Ascending aorta (tissue), 2 donors: ENCODE measurements at regions of chr10 and their contacts with region 1.

Region 1: GRCh38 chr10:11611248-11612020 is at the start of gene USP6NL:
- DNase-seq: peak; percentile 36 to 91
- H3K4me3 ChIP-seq: peak within 1 kb of the TSS; percentile 91 to 96
- H3K27ac ChIP-seq: peak within 1 kb of the TSS; percentile 89 to 90
- H3K4me1 ChIP-seq: peaks cover 0 to 3% of the 10 kb centered on the region in 2 donors
- H3K27me3 ChIP-seq: no peaks in the 10 kb centered on the region
- CTCF ChIP-seq: no peak
- total RNA-seq, gene USP6NL: 20.5 TPM

Region 2: GRCh38 chr10:11527691-11528255 is 83.7 kb before region 1 on chr10:
- intact Hi-C with region 1: loop called (anchors 2 kb)
- DNase-seq: no peak
- H3K4me3 ChIP-seq: peak overlapping the region in 1 of 2 donors; percentile 20
- H3K27ac ChIP-seq: no peak overlapping the region
- H3K4me1 ChIP-seq: peaks cover 0 to 4% of the 10 kb centered on the region in 2 donors
- H3K27me3 ChIP-seq: no peaks in the 10 kb centered on the region
- CTCF ChIP-seq: no peak

Region 3: GRCh38 chr10:11551916-11552602 is 59.4 kb before region 1 on chr10:
- intact Hi-C with region 1: loop called (anchors 5 kb)
- DNase-seq: no peak
- H3K4me3 ChIP-seq: no peak overlapping the region
- H3K27ac ChIP-seq: peak overlapping the region in 1 of 2 donors; percentile 16
- H3K4me1 ChIP-seq: no peaks in the 10 kb centered on the region
- H3K27me3 ChIP-seq: no peaks in the 10 kb centered on the region
- CTCF ChIP-seq: no peak

Region 4: DNA sequence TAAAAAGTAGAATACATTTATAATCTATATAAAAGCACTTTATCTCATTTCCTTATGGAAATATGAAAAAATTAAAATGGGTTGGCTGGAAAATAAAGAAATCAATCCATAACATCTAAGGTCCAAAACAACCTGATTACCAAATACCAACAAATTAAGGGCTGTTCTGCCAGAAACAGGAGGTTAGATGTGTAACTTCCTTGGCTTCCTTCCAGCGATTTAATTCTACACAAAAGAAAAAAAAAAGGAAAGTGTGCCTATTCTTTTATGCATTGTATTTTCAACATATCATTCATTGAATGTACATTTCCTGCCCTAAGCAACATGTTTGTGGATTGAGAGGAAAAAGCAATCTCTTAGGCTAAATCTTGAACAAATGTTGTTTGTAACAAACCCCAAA is 36.2 kb after region 1 on chr10:
- intact Hi-C with region 1: no loop called
- DNase-seq: no peak
- H3K4me3 ChIP-seq: no peak overlapping the region
- H3K27ac ChIP-seq: no peak overlapping the region
- H3K4me1 ChIP-seq: no peaks in the 10 kb centered on the region
- H3K27me3 ChIP-seq: no peaks in the 10 kb centered on the region
- CTCF ChIP-seq: no peak

Region 5: DNA sequence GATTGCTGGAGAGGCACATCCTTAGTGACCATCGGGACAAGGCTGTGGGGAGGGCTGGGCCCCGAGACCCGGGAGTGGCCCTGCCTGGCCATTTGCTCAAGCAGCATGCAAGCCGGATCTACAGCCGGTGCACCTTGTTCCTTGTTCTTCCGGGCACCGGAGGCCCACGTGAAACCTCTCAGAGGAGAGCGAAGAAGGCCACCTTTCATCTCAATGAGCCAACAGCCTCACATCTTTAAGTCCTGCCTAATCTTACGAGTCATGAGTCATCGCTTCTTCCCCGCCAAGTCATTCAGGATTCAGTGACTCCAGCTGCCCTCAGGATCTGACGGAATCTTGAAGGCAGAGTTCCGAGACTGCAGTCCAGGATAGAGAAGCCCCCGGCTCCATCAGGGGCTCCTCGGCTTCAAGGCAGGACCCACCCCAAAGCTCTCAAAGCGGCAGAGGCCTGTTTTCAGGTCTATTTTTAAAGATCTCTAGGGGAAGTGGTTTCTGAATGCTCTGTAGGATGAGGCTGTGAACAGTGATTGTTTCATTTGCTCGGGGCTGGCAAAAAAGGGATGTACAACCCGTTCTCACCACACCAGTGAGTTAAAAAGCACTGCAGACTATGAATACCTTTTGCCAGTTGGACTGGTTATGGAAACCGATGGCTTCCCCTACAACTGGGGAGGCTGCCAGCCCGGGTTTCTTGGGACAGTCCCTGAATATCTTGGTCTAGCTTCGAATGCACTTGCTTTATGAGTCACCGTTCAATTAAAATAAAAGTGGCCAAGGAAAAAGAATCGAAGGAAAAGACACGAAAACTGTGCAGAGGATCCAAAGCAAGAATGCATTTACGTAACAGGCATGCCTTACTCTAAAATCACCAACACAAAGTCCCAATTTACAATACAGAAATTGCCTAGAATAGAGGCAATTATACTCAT is 73.5 kb after region 1 on chr10:
- intact Hi-C with region 1: loop called (anchors 5 kb)
- DNase-seq: peak; percentile 25 to 82
- H3K4me3 ChIP-seq: peak overlapping the region; percentile 43 to 55
- H3K27ac ChIP-seq: peak overlapping the region; percentile 62 to 79
- H3K4me1 ChIP-seq: peaks cover 2 to 6% of the 10 kb centered on the region in 2 donors
- H3K27me3 ChIP-seq: no peaks in the 10 kb centered on the region
- CTCF ChIP-seq: no peak

Region 6: DNA sequence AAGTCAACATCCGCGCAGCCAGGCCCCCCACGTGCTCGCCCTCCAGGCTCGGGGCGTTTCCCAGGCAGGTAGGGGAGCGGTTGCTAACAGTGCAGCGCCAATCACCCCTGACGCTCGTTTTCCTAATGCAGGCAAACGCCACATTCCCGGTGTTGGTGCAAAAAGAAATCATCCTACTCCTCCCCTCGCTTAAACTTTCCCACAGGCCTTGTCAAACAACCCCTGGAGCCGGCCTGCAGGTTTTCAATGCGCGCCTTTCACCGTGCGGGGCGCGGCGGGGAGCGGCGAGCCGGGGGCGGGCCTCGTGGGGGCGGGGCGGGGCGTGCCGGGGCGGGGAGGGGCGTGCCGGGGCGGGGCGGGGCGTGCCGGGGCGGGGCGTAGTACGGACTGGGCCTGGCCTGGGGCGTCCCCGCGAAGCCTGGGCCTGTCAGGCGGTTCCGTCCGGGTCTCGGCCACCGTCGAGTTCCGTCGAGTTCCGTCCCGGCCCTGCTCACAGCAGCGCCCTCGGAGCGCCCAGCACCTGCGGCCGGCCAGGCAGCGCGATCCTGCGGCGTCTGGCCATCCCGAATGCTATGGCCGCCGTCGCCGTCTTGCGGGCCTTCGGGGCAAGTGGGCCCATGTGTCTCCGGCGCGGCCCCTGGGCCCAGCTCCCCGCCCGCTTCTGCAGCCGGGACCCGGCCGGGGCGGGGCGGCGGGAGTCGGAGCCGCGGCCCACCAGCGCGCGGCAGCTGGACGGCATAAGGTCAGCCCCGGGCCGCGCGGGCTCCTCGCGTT is 130.8 kb after region 1 on chr10 and contains the start of gene ECHDC3:
- intact Hi-C with region 1: loop called (anchors 10 kb)
- DNase-seq: no peak
- H3K4me3 ChIP-seq: peak within 1 kb of the TSS; percentile 60 to 87
- H3K27ac ChIP-seq: peak within 1 kb of the TSS in 1 of 2 donors; percentile 57
- H3K4me1 ChIP-seq: no peaks in the 10 kb centered on the region
- H3K27me3 ChIP-seq: no peaks in the 10 kb centered on the region
- CTCF ChIP-seq: no peak
- total RNA-seq, gene ECHDC3: 12.2 TPM

Region 7: DNA sequence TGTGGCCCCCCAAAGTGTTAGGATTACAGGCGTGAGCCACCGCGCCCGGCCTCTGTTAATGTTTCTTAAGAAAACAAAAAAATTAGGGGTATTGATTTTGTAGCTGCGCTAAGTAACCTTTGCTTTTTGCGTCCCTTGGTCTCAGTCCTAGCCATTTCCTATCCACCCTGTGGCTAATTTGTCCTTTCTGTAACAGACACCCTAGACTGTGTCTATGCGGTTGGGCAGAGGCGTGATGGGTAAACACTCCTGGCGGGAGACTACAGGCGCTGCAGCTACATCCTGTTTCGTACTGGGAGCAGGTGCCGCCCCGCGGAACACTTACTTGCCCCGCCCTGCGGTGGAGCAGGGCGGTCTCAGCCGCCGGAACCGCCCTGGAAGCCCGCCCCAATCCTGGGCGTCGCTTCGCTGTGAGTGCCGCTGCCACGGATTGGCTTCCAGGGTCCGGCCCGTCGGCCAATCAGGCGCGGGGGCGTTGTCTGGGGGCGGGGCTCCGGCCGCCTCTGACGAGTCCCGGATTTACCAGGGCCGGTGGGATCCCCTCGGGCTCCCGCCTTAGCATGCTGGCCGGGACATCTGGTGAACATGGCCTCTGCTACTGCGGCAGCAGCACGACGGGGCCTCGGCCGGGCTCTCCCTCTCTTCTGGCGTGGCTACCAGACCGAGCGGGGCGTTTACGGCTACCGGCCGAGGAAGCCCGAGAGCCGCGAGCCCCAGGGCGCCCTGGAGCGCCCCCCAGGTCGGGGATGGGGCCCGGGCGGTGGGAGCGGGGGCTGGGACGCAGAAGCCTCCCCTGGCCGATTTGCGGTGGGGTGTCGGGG is 457.2 kb after region 1 on chr10 and contains the start of gene DHTKD1:
- intact Hi-C with region 1: loop called (anchors 5 kb)
- DNase-seq: peak; percentile 93 to 99
- H3K4me3 ChIP-seq: peak within 1 kb of the TSS; percentile 72 to 90
- H3K27ac ChIP-seq: peak within 1 kb of the TSS; percentile 72 to 85
- H3K4me1 ChIP-seq: peaks cover 0 to 3% of the 10 kb centered on the region in 2 donors
- H3K27me3 ChIP-seq: no peaks in the 10 kb centered on the region
- CTCF ChIP-seq: peak; percentile 21 to 63 (median 43)
- total RNA-seq, gene DHTKD1: 12.6 TPM

Region 8: GRCh38 chr10:13348216-13349017 is 1737.0 kb after region 1 on chr10 and contains the start of gene SEPHS1:
- intact Hi-C with region 1: loop called (anchors 5 kb)
- DNase-seq: peak in 1 of 2 donors; percentile 85
- H3K4me3 ChIP-seq: peak within 1 kb of the TSS; percentile 90 to 93
- H3K27ac ChIP-seq: peak within 1 kb of the TSS; percentile 93 to 96
- H3K4me1 ChIP-seq: peaks cover 0 to 13% of the 10 kb centered on the region in 2 donors
- H3K27me3 ChIP-seq: no peaks in the 10 kb centered on the region
- CTCF ChIP-seq: peak in 2 of 3 experiments; percentile 5 to 10
- total RNA-seq, gene SEPHS1: 20.3 TPM